ENCODE measurements at regions of chr15 and their contacts with region 1.

Region 1: GRCh38 chr15:45279024-45279698 is 27.1 kb downstream of the SLC28A2 start:
- DNase-seq: peak; percentile 98
- ATAC-seq: peak; percentile 100
- H3K4me3 ChIP-seq: peak overlapping the region; percentile 47 to 81 (median 65)
- H3K27ac ChIP-seq: peak overlapping the region; percentile 27 to 90 (median 87)
- H3K4me1 ChIP-seq: peaks cover 5 to 23% (median 15%) of the 10 kb centered on the region in 9 donors
- H3K27me3 ChIP-seq: no peaks in the 10 kb centered on the region
- CTCF ChIP-seq: peak in 1 of 9 donors; percentile 12

Region 2: DNA sequence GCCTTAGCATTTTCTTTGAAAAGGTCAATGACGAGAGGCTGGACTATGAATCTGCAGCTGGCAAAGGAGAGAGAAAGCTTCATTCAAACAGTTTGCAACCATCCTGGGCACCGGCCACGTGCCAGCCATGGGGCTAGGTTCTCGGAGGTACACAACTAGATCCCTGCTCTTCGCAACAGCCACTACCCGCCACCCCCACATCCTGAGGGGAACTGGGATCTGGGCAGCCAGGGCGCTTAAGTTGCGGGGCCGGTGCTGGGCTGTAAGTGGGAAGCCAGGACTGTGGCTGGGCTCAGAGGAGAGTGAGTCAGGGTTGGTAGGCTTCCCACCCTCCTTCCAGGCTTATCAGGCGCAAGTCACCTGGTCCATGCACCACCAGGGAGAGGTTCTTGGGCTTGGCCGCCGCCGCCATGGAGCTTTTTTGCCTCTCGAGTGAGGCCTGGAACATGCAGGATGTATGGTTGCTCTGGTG is 417.7 kb before region 1 on chr15:
- intact Hi-C with region 1: no loop called
- DNase-seq: peak in 1 of 2 donors; percentile 8
- ATAC-seq: no peak
- H3K4me3 ChIP-seq: no peak overlapping the region
- H3K27ac ChIP-seq: no peak overlapping the region
- H3K4me1 ChIP-seq: no peaks in the 10 kb centered on the region
- H3K27me3 ChIP-seq: peaks cover 0 to 7% (median 0%) of the 10 kb centered on the region in 7 donors
- CTCF ChIP-seq: no peak

Region 3: GRCh38 chr15:45157974-45158373 is 121.2 kb before region 1 on chr15:
- intact Hi-C with region 1: loop called in 2 of 10 experiments (anchors 2 to 5 kb)
- DNase-seq: no peak
- ATAC-seq: peak in 2 of 8 donors; percentile 21 to 24
- H3K4me3 ChIP-seq: no peak overlapping the region
- H3K27ac ChIP-seq: peak overlapping the region in 1 of 10 donors; percentile 41
- H3K4me1 ChIP-seq: peaks cover 0 to 7% (median 5%) of the 10 kb centered on the region in 9 donors
- H3K27me3 ChIP-seq: no peaks in the 10 kb centered on the region
- CTCF ChIP-seq: no peak

Region 4: GRCh38 chr15:45166834-45167630 is 112.1 kb before region 1 on chr15:
- intact Hi-C with region 1: loop called in 2 of 10 experiments (anchors 1 to 2 kb)
- DNase-seq: peak; percentile 86 to 89
- ATAC-seq: peak; percentile 81 to 90 (median 86)
- H3K4me3 ChIP-seq: peak overlapping the region; percentile 42 to 92 (median 78)
- H3K27ac ChIP-seq: peak overlapping the region; percentile 97 to 100 (median 99)
- H3K4me1 ChIP-seq: peaks cover 0 to 42% (median 19%) of the 10 kb centered on the region in 9 donors
- H3K27me3 ChIP-seq: no peaks in the 10 kb centered on the region
- CTCF ChIP-seq: peak in 8 of 9 donors; percentile 53 to 72 (median 64)

Region 5: DNA sequence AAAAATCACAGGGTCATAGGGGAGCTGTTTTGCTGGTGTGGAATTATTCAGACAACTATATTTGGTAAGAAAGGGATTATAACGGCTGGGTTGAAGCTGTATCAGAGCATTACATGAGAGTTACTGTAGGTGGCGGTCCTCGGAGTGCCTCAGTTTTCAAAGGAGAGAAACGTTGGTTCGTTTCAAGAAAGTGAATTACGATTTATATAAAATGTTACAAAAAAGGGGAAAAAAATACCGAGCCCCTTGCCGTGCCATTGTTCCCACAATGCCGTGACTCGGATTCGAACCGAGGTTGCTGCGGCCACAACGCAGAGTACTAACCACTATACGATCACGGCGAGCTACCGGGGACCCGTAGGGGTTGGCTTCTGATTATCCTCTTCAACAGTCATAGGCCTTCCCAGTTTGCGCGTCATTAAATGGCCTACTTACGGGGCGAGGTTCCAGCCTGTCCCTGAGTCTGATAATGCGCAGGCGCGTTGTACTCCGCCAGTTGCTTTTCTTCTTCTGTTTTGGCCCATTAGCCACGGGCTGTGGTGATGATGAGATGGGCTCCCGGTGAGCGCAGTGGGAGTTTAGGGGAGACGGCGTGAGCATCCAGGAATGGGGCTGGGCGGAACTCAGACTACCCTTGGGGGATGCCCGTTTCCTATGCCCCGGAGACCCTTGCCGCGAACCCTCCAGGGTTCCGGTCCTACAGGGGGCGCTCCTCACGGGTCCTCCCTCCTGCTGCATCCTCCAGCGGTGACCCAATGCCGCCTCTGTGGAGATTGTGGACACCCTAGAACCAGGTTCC is 80.6 kb before region 1 on chr15:
- intact Hi-C with region 1: loop called in 3 of 10 experiments (anchors 1 to 2 kb)
- DNase-seq: peak; percentile 86 to 98
- ATAC-seq: peak; percentile 79 to 89 (median 84)
- H3K4me3 ChIP-seq: peak overlapping the region; percentile 30 to 80 (median 72)
- H3K27ac ChIP-seq: peak overlapping the region; percentile 85 to 99 (median 96)
- H3K4me1 ChIP-seq: peaks cover 0 to 45% (median 9%) of the 10 kb centered on the region in 9 donors
- H3K27me3 ChIP-seq: no peaks in the 10 kb centered on the region
- CTCF ChIP-seq: peak; percentile 39 to 90 (median 70)

Region 6: GRCh38 chr15:45205192-45205591 is 74.0 kb before region 1 on chr15:
- intact Hi-C with region 1: loop called in 6 of 10 experiments (anchors 1 to 5 kb)
- DNase-seq: peak in 1 of 2 donors; percentile 57
- ATAC-seq: no peak
- H3K4me3 ChIP-seq: no peak overlapping the region
- H3K27ac ChIP-seq: peak overlapping the region in 1 of 10 donors; percentile 45
- H3K4me1 ChIP-seq: peaks cover 0 to 28% (median 14%) of the 10 kb centered on the region in 9 donors
- H3K27me3 ChIP-seq: no peaks in the 10 kb centered on the region
- CTCF ChIP-seq: peak; percentile 56 to 82 (median 74)

Region 7: GRCh38 chr15:45212493-45212892 is 66.7 kb before region 1 on chr15:
- intact Hi-C with region 1: loop called in 3 of 10 experiments (anchors 5 kb)
- DNase-seq: no peak
- ATAC-seq: no peak
- H3K4me3 ChIP-seq: no peak overlapping the region
- H3K27ac ChIP-seq: no peak overlapping the region
- H3K4me1 ChIP-seq: no peaks in the 10 kb centered on the region
- H3K27me3 ChIP-seq: peaks cover 0 to 4% (median 0%) of the 10 kb centered on the region in 7 donors
- CTCF ChIP-seq: no peak

Region 8: GRCh38 chr15:45468294-45468693 is 189.1 kb after region 1 on chr15:
- intact Hi-C with region 1: no loop called
- DNase-seq: no peak
- ATAC-seq: no peak
- H3K4me3 ChIP-seq: no peak overlapping the region
- H3K27ac ChIP-seq: no peak overlapping the region
- H3K4me1 ChIP-seq: no peaks in the 10 kb centered on the region
- H3K27me3 ChIP-seq: peaks cover 0 to 50% (median 35%) of the 10 kb centered on the region in 7 donors
- CTCF ChIP-seq: no peak